ENCODE measurements at regions of chr21 and their contacts with region 1.

Region 1: GRCh38 chr21:45973659-45974072 is 7.9 kb upstream of the COL6A1 start:
- DNase-seq: peak; percentile 92
- ATAC-seq: peak; percentile 49

Region 2: DNA sequence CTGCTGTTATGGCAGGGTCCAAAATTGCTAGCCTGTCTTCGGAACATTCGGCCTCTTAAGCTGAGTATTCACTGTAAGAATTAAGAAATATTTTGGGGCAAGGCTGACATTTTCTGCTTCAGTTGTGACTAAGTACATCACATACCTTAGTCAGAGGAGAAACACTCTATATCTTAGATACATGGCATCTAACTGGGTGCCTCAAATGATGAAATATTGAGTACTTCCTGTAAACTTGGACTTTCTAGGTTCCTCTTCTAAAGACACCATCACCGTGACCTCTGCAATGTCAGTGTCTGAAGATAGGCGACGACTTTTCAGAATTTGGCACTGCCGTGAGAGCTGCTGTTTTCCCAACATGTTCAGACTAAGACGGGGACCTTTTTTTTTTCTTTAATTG is 264.5 kb before region 1 on chr21:
- intact Hi-C with region 1: no loop called
- DNase-seq: no peak
- ATAC-seq: no peak

Region 3: GRCh38 chr21:46025113-46025770 is 51.6 kb after region 1 on chr21:
- intact Hi-C with region 1: loop called (anchors 5 kb)
- DNase-seq: no peak
- ATAC-seq: no peak

Region 4: DNA sequence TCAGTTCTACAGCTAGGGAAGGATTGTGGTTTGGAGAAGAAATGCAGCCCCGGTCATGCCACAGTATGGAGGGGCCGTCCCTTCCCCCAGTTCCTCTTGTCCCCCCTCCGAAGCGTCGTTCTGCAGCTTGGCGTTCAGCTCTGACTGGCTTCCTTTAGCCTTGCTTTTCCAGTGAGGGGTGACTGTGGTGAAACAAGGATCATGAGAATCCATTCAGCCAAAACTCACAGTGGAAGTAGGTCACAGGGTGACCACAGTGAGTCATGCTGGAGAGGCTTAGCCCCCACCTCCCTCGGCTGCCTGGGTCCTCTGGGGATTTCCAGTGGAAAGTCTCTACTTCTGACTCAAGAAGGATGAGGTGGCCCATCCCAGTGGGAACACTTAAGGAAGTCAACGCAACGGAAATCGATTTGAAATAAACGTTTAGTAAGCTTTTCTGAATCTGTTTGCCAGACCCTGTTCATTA is 87.0 kb after region 1 on chr21:
- intact Hi-C with region 1: loop called (anchors 5 kb)
- DNase-seq: peak; percentile 71
- ATAC-seq: peak; percentile 62

Region 5: GRCh38 chr21:46097336-46098293 is 123.9 kb after region 1 on chr21 and contains the start of gene COL6A2:
- intact Hi-C with region 1: loop called (anchors 2 kb)
- DNase-seq: peak; percentile 85
- ATAC-seq: peak; percentile 86
- total RNA-seq, gene COL6A2: 254 TPM

Region 6: GRCh38 chr21:46228345-46229051 is 254.8 kb after region 1 on chr21 and contains the start of gene LSS:
- intact Hi-C with region 1: loop called (anchors 10 kb)
- DNase-seq: peak; percentile 99
- ATAC-seq: peak; percentile 95
- total RNA-seq, gene LSS: 61.0 TPM

Region 7: DNA sequence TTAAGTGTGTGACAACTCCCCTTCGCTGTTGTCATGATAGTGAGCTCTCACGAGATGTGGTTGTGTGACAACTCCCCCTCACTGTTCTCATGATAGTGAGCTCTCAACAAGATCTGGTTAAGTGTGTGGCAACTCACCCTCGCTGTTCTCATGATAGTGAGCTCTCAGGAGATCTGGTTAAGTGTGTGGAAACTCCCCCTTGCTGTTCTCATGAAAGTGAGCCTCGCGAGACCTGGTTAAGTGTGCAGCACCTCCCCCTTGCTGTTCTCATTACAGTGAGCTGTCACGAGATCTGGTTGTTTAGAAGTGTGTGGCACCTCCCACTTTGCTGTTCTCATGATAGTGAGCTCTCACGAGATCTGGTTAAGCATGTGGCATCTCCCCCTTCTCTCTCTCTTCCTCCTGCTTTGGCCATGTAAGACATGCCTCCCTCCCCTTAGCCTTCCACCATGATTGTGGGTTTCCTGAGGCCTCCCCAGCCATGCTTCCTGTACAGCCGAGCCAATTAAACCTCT is 280.0 kb after region 1 on chr21:
- intact Hi-C with region 1: loop called (anchors 10 kb)
- DNase-seq: no peak
- ATAC-seq: no peak

Region 8: DNA sequence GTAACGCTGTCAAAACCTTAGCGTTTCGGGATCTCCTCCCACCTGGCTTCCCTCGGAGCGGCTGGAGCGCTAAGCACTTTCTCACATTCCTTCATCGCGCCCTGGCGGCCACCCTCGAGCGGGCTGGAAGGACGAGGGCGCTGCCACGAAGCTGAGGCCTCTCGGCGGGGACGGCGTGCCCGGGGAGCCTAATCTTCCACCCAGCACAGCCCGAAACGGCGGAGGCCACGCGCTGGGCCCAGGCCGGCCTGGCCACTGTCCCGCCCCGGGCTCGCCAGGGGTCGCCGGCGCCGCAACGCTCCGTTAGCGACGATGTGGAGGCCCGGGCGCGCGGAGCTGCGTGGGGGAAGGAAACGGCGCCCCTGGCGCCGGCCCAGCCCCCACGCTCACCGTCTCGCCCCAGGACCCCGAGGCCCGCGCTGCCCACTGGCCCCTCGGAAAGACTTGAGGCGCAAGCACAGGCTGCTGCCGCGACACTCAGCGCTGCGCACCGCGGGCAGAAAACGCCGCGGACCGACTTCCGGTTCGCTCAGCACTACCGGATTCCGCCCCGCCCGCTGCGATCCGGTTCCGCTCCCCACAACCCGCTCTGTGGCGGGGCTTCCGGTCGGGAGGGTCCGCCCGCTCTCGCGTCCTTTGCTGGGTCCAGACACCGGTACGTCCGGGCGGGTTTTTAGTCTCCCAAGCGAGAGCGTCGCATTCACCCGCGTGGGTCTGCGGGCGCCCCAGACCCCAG is 312.3 kb after region 1 on chr21 and contains the start of gene YBEY:
- intact Hi-C with region 1: loop called (anchors 10 kb)
- DNase-seq: peak; percentile 93
- ATAC-seq: peak; percentile 97
- total RNA-seq, gene YBEY: 18.6 TPM